Tibial artery (tissue), 4 donors: ENCODE measurements at regions of chr2 and their contacts with region 1.

Region 1: DNA sequence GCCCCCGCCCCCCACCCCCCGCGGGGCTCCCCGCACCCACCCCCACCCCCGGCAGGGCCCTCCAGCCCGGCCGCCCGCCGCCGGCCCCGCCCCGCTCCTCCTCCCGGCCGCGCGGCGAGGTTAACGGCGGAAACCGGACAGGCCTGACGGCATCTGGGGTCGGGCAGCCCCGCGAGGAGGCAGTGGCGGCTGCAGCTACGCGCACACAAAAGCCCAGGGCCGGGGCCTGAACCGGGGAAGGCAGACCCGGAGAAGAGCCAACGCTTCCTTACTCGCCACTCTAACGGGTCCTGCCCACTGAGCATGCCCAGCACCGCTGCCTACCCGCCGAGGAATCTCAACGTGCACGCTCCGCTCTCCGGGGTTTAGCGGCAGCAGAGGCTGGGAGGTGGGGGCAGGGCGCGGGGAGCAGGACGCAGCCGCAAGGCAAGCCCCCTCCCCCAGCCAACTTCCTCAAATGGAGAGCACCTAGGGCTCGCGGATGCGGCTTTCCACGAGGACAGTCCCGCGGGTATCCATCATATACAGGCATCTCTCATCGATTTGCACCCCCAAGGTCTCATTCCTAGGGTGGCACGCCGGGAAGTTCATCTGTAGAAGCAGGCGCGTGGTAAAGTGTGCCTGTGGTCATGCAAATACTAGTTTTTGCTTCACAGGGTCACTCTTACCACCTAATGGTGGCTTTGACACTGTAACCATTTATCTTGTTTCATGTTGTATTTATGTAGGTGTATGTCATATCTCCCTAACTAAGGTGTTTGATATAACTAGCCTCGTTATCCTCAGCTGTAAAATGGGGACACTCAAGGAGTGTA is at the start of gene MEMO1:
- DNase-seq: peak; percentile 91 to 96
- H3K4me3 ChIP-seq: peak within 1 kb of the TSS; percentile 81 to 98
- H3K27ac ChIP-seq: peak within 1 kb of the TSS; percentile 92 to 93
- H3K4me1 ChIP-seq: peaks cover 0 to 39% (median 12%) of the 10 kb centered on the region in 4 donors
- H3K27me3 ChIP-seq: no peaks in the 10 kb centered on the region
- CTCF ChIP-seq: no peak

Region 2: DNA sequence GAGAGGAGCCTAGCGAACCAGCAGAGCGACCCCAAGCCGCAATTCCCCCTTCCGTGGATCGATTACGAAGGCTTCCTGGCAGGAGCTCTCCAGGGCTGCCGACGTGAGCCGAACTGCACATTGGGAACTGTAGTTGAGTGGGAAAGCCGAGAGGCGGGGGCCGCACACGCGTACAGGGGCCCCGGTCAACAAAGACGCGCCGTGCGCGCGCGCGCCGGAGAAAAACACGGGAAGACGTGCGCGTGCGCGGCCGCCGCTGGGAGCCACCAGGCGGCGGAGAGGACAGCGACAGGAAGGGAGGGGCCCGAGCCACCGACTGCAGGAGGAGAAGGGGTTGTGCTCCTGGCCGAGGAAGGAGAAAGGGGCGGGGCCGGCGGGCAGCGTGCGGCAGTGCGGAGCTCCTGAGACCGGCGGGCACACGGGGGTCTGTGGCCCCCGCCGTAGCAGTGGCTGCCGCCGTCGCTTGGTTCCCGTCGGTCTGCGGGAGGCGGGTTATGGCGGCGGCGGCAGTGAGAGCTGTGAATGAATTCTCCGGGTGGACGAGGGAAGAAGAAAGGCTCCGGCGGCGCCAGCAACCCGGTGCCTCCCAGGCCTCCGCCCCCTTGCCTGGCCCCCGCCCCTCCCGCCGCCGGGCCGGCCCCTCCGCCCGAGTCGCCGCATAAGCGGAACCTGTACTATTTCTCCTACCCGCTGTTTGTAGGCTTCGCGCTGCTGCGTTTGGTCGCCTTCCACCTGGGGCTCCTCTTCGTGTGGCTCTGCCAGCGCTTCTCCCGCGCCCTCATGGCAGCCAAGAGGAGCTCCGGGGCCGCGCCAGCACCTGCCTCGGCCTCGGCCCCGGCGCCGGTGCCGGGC is 52.7 kb after region 1 on chr2 and contains the start of gene SPAST:
- intact Hi-C with region 1: loop called (anchors 5 kb)
- DNase-seq: peak; percentile 97 to 99
- H3K4me3 ChIP-seq: peak within 1 kb of the TSS; percentile 68 to 95
- H3K27ac ChIP-seq: peak within 1 kb of the TSS; percentile 90 to 92
- H3K4me1 ChIP-seq: peaks cover 0 to 32% (median 10%) of the 10 kb centered on the region in 4 donors
- H3K27me3 ChIP-seq: no peaks in the 10 kb centered on the region
- CTCF ChIP-seq: peak; percentile 72 to 88

Region 3: DNA sequence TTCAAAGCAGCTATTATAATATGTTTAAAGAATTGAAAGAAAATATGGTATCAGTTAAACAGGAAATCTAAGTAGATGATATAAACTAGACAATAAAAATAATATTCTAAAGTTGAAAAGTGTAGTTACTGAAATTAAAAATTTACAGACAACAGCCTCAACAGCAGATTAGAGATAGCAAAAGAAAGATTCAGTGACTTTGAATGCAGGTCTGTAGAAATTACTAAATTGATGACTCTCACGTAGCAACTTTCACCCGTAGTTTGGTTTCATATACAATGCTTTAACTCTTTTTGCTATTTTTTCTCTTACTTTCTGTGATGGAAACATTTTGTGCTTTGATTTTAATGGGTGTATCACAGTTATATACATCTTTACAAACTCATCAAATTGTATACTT is 97.2 kb after region 1 on chr2:
- intact Hi-C with region 1: no loop called
- DNase-seq: no peak
- H3K4me3 ChIP-seq: no peak overlapping the region
- H3K27ac ChIP-seq: no peak overlapping the region
- H3K4me1 ChIP-seq: no peaks in the 10 kb centered on the region
- H3K27me3 ChIP-seq: no peaks in the 10 kb centered on the region
- CTCF ChIP-seq: no peak

Region 4: GRCh38 chr2:33404321-33404720 is 1393.4 kb after region 1 on chr2:
- intact Hi-C with region 1: loop called (anchors 5 kb)
- DNase-seq: no peak
- H3K4me3 ChIP-seq: no peak overlapping the region
- H3K27ac ChIP-seq: peak overlapping the region in 1 of 2 donors; percentile 26
- H3K4me1 ChIP-seq: no peaks in the 10 kb centered on the region
- H3K27me3 ChIP-seq: no peaks in the 10 kb centered on the region
- CTCF ChIP-seq: no peak